SK-MEL-5 (cell line): ENCODE measurements at regions of chr5 and their contacts with region 1.

Region 1: GRCh38 chr5:88690409-88691229 is 192.4 kb downstream of the MEF2C start:
- DNase-seq: peak; percentile 69

Region 2: GRCh38 chr5:87780831-87781760 is 909.5 kb before region 1 on chr5:
- in situ Hi-C with region 1: loop called (anchors 10 kb)
- DNase-seq: peak; percentile 93

Region 3: GRCh38 chr5:88298425-88298824 is 392.2 kb before region 1 on chr5:
- in situ Hi-C with region 1: loop called (anchors 25 kb)
- DNase-seq: no peak

Region 4: GRCh38 chr5:88452820-88453219 is 237.8 kb before region 1 on chr5:
- in situ Hi-C with region 1: no loop called
- DNase-seq: no peak